Naive thymus-derived CD4-positive, alpha-beta T cell (primary cell): ENCODE measurements at regions of chr20 and their contacts with region 1.

Region 1: GRCh38 chr20:36988494-36988966 is 37.0 kb upstream of the SAMHD1 start:
- DNase-seq: peak in 7 of 9 donors; percentile 57 to 77 (median 66)
- ATAC-seq: peak; percentile 76
- H3K4me3 ChIP-seq: no peak overlapping the region
- H3K4me3 Mint-ChIP-seq: peak overlapping the region in 9 of 10 donors; percentile 18 to 85 (median 62)
- H3K27ac ChIP-seq: peak overlapping the region; percentile 72
- H3K27ac Mint-ChIP-seq: peak overlapping the region; percentile 62 to 99 (median 97)
- H3K4me1 ChIP-seq: peaks cover 9 to 32% of the 10 kb centered on the region in 2 donors
- H3K4me1 Mint-ChIP-seq: peaks cover 27 to 66% (median 53%) of the 10 kb centered on the region in 7 donors
- H3K27me3 ChIP-seq: no peaks in the 10 kb centered on the region
- H3K27me3 Mint-ChIP-seq: no peaks in the 10 kb centered on the region

Region 2: GRCh38 chr20:36919715-36920333 is 68.7 kb before region 1 on chr20:
- CTCF ChIA-PET with region 1: no interaction called
- POLR2A ChIA-PET with region 1: interaction called, 12 read pairs
- intact Hi-C with region 1: no loop called
- DNase-seq: peak in 7 of 9 donors; percentile 43 to 73 (median 67)
- ATAC-seq: peak; percentile 90
- H3K4me3 ChIP-seq: no peak overlapping the region
- H3K4me3 Mint-ChIP-seq: peak overlapping the region in 5 of 10 donors; percentile 2 to 34 (median 26)
- H3K27ac ChIP-seq: peak overlapping the region; percentile 47
- H3K27ac Mint-ChIP-seq: peak overlapping the region; percentile 56 to 98 (median 75)
- H3K4me1 ChIP-seq: peaks cover 0 to 30% of the 10 kb centered on the region in 2 donors
- H3K4me1 Mint-ChIP-seq: peaks cover 15 to 44% (median 24%) of the 10 kb centered on the region in 7 donors
- H3K27me3 ChIP-seq: no peaks in the 10 kb centered on the region
- H3K27me3 Mint-ChIP-seq: no peaks in the 10 kb centered on the region

Region 3: GRCh38 chr20:36998652-36999051 is 10.1 kb after region 1 on chr20:
- CTCF ChIA-PET with region 1: no interaction called
- POLR2A ChIA-PET with region 1: interaction called, 22 read pairs
- intact Hi-C with region 1: no loop called
- DNase-seq: peak in 7 of 9 donors; percentile 56 to 84 (median 76)
- ATAC-seq: peak; percentile 82
- H3K4me3 ChIP-seq: no peak overlapping the region
- H3K4me3 Mint-ChIP-seq: peak overlapping the region in 6 of 10 donors; percentile 1 to 67 (median 37)
- H3K27ac ChIP-seq: peak overlapping the region; percentile 64
- H3K27ac Mint-ChIP-seq: peak overlapping the region; percentile 80 to 99 (median 93)
- H3K4me1 ChIP-seq: no peaks in the 10 kb centered on the region
- H3K4me1 Mint-ChIP-seq: peaks cover 11 to 41% (median 31%) of the 10 kb centered on the region in 7 donors
- H3K27me3 ChIP-seq: no peaks in the 10 kb centered on the region
- H3K27me3 Mint-ChIP-seq: no peaks in the 10 kb centered on the region